CD4-positive, alpha-beta memory T cell (primary cell): ENCODE measurements at regions of chr9 and their contacts with region 1.

Region 1: GRCh38 chr9:36487482-36488388 is 85.0 kb upstream of the MELK start:
- DNase-seq: peak; percentile 90 to 95 (median 92)
- H3K4me3 ChIP-seq: peak overlapping the region; percentile 18 to 85
- H3K4me3 Mint-ChIP-seq: peak overlapping the region; percentile 93 to 98 (median 96)
- H3K27ac ChIP-seq: peak overlapping the region; percentile 89
- H3K27ac Mint-ChIP-seq: peak overlapping the region; percentile 97 to 99 (median 98)
- H3K4me1 ChIP-seq: peaks cover 58% of the 10 kb centered on the region
- H3K4me1 Mint-ChIP-seq: peaks cover 42 to 80% (median 59%) of the 10 kb centered on the region in 4 donors
- H3K27me3 ChIP-seq: no peaks in the 10 kb centered on the region
- H3K27me3 Mint-ChIP-seq: no peaks in the 10 kb centered on the region

Region 2: DNA sequence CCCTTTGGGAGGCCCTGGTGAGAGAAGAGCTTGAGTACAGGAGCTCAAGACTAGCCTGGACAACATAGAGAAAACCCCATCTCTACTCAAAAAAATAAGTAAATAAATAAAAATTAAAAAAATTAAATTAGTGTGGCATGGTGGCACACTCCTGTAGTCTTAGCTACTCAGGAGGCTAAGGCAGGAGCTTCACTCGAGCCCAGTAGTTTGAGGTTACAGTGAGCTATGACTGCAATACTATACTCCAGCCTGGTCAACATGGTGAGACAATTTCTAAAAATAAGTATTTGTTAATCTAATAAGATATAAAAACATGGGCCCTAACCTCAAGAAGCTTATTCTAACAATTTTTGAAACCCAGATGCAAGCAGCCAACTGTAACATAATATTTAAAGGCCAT is 95.2 kb before region 1 on chr9:
- CTCF ChIA-PET with region 1: no interaction called
- POLR2A ChIA-PET with region 1: no interaction called
- intact Hi-C with region 1: no loop called
- DNase-seq: no peak
- H3K4me3 ChIP-seq: no peak overlapping the region
- H3K4me3 Mint-ChIP-seq: no peak overlapping the region
- H3K27ac ChIP-seq: no peak overlapping the region
- H3K27ac Mint-ChIP-seq: peak overlapping the region in 1 of 7 donors; percentile 55
- H3K4me1 ChIP-seq: peaks cover 73% of the 10 kb centered on the region
- H3K4me1 Mint-ChIP-seq: peaks cover 58 to 85% (median 73%) of the 10 kb centered on the region in 4 donors
- H3K27me3 ChIP-seq: no peaks in the 10 kb centered on the region
- H3K27me3 Mint-ChIP-seq: no peaks in the 10 kb centered on the region

Region 3: GRCh38 chr9:36441966-36442365 is 45.8 kb before region 1 on chr9:
- CTCF ChIA-PET with region 1: interaction called, 4 read pairs
- POLR2A ChIA-PET with region 1: interaction called, 17 read pairs
- intact Hi-C with region 1: no loop called
- DNase-seq: no peak
- H3K4me3 ChIP-seq: no peak overlapping the region
- H3K4me3 Mint-ChIP-seq: peak overlapping the region in 3 of 8 donors; percentile 2 to 48 (median 26)
- H3K27ac ChIP-seq: no peak overlapping the region
- H3K27ac Mint-ChIP-seq: peak overlapping the region in 1 of 7 donors; percentile 11
- H3K4me1 ChIP-seq: peaks cover 48% of the 10 kb centered on the region
- H3K4me1 Mint-ChIP-seq: peaks cover 43 to 74% (median 53%) of the 10 kb centered on the region in 4 donors
- H3K27me3 ChIP-seq: no peaks in the 10 kb centered on the region
- H3K27me3 Mint-ChIP-seq: no peaks in the 10 kb centered on the region

Region 4: GRCh38 chr9:36461323-36461722 is 26.4 kb before region 1 on chr9:
- CTCF ChIA-PET with region 1: interaction called, 4 read pairs
- POLR2A ChIA-PET with region 1: interaction called, 88 read pairs
- intact Hi-C with region 1: no loop called
- DNase-seq: no peak
- H3K4me3 ChIP-seq: no peak overlapping the region
- H3K4me3 Mint-ChIP-seq: peak overlapping the region in 1 of 8 donors; percentile 28
- H3K27ac ChIP-seq: no peak overlapping the region
- H3K27ac Mint-ChIP-seq: peak overlapping the region; percentile 2 to 64 (median 43)
- H3K4me1 ChIP-seq: peaks cover 29% of the 10 kb centered on the region
- H3K4me1 Mint-ChIP-seq: peaks cover 43 to 68% (median 53%) of the 10 kb centered on the region in 4 donors
- H3K27me3 ChIP-seq: no peaks in the 10 kb centered on the region
- H3K27me3 Mint-ChIP-seq: no peaks in the 10 kb centered on the region

Region 5: GRCh38 chr9:36499174-36499890 is 11.6 kb after region 1 on chr9:
- CTCF ChIA-PET with region 1: interaction called, 3 read pairs
- POLR2A ChIA-PET with region 1: interaction called, 10 read pairs
- intact Hi-C with region 1: no loop called
- DNase-seq: no peak
- H3K4me3 ChIP-seq: no peak overlapping the region
- H3K4me3 Mint-ChIP-seq: no peak overlapping the region
- H3K27ac ChIP-seq: no peak overlapping the region
- H3K27ac Mint-ChIP-seq: no peak overlapping the region
- H3K4me1 ChIP-seq: peaks cover 13% of the 10 kb centered on the region
- H3K4me1 Mint-ChIP-seq: peaks cover 10 to 28% (median 21%) of the 10 kb centered on the region in 4 donors
- H3K27me3 ChIP-seq: no peaks in the 10 kb centered on the region
- H3K27me3 Mint-ChIP-seq: no peaks in the 10 kb centered on the region

Region 6: GRCh38 chr9:36572515-36573418 is 85.0 kb after region 1 on chr9 and contains the start of gene MELK:
- CTCF ChIA-PET with region 1: no interaction called
- POLR2A ChIA-PET with region 1: no interaction called
- intact Hi-C with region 1: loop called (anchors 2 kb)
- DNase-seq: peak; percentile 76 to 86 (median 81)
- H3K4me3 ChIP-seq: peak within 1 kb of the TSS; percentile 76 to 95
- H3K4me3 Mint-ChIP-seq: peak within 1 kb of the TSS; percentile 90 to 95 (median 92)
- H3K27ac ChIP-seq: peak within 1 kb of the TSS; percentile 70
- H3K27ac Mint-ChIP-seq: peak within 1 kb of the TSS; percentile 77 to 90 (median 89)
- H3K4me1 ChIP-seq: peaks cover 20% of the 10 kb centered on the region
- H3K4me1 Mint-ChIP-seq: peaks cover 15 to 32% (median 25%) of the 10 kb centered on the region in 4 donors
- H3K27me3 ChIP-seq: no peaks in the 10 kb centered on the region
- H3K27me3 Mint-ChIP-seq: no peaks in the 10 kb centered on the region
- total RNA-seq, gene MELK: 0.19 to 0.38 TPM